ENCODE measurements at regions of chr3 and their contacts with region 1.

Region 1: GRCh38 chr3:14461748-14462324 is 59.4 kb downstream of the SLC6A6 start:
- DNase-seq: peak; percentile 34
- H3K4me3 ChIP-seq: no peak overlapping the region
- H3K27ac ChIP-seq: no peak overlapping the region
- H3K27me3 ChIP-seq: no peaks in the 10 kb centered on the region
- CTCF ChIP-seq: peak; percentile 89

Region 2: GRCh38 chr3:14261229-14261628 is 200.6 kb before region 1 on chr3:
- CTCF ChIA-PET with region 1: interaction called, 52 read pairs
- POLR2A ChIA-PET with region 1: no interaction called
- DNase-seq: peak; percentile 48
- H3K4me3 ChIP-seq: no peak overlapping the region
- H3K27ac ChIP-seq: no peak overlapping the region
- H3K27me3 ChIP-seq: no peaks in the 10 kb centered on the region
- CTCF ChIP-seq: peak; percentile 99

Region 3: DNA sequence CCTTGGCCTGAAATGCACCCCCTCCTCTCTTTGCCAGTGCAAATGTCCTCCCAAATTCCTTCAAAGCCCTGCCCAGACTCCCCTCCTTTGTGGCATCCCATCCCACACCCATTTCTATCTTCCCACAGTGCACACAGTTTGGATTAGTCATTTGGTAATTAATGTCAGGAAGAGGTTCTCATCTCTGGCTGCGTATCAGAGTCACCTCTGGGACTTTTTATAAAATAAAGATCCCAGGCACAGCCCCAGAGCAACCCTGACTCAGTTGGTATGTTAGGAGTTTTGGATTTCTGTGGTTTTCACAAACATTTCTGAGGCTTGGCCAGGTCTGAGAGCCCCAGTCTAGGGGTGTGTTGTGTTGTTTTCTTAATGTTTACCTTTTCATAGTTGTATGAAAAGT is 254.8 kb after region 1 on chr3:
- CTCF ChIA-PET with region 1: no interaction called
- POLR2A ChIA-PET with region 1: no interaction called
- DNase-seq: no peak
- H3K4me3 ChIP-seq: no peak overlapping the region
- H3K27ac ChIP-seq: no peak overlapping the region
- H3K27me3 ChIP-seq: peaks cover 5% of the 10 kb centered on the region
- CTCF ChIP-seq: no peak

Measured in AG04450 (cell line).